AG04450 (cell line): ENCODE measurements at regions of chr6 and their contacts with region 1.

Region 1: GRCh38 chr6:42661540-42662153 is 60.8 kb downstream of the PRPH2 start:
- DNase-seq: peak; percentile 23
- H3K4me3 ChIP-seq: no peak overlapping the region
- H3K27ac ChIP-seq: no peak overlapping the region
- H3K27me3 ChIP-seq: no peaks in the 10 kb centered on the region
- CTCF ChIP-seq: peak; percentile 90

Region 2: GRCh38 chr6:42692137-42692911 is 30.7 kb after region 1 on chr6:
- CTCF ChIA-PET with region 1: interaction called, 10 read pairs
- POLR2A ChIA-PET with region 1: no interaction called
- DNase-seq: no peak
- H3K4me3 ChIP-seq: no peak overlapping the region
- H3K27ac ChIP-seq: peak overlapping the region; percentile 47
- H3K27me3 ChIP-seq: no peaks in the 10 kb centered on the region
- CTCF ChIP-seq: no peak

Region 3: DNA sequence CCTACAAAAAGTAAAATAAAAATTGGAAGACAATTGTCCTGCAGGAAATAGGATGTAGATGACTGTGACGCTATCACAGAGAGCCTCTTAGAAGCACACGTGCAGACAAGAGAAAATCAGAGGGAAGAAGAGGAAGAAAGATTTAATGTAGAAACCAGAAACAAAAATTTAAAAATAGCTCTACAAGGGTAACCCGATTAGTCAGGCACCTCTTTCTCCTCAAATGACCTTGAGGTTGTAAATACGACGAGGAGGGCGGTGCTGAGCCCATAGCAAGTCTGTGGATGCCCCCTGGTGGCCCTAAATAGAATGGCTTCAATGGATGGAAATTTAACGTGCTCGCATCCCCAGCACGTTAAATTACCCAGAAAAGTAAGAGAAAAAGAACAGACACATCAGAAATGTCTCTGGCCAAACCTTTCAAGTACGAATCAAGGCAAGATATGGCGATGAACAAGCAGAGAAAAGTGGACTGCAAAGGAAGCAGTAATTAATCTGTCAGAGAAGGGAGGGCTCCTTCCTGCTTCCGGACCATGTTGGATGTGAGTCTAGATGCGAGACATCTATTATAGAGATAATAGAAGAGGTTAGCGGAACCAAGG is 64.9 kb after region 1 on chr6:
- CTCF ChIA-PET with region 1: interaction called, 51 read pairs
- POLR2A ChIA-PET with region 1: no interaction called
- DNase-seq: peak; percentile 87
- H3K4me3 ChIP-seq: peak overlapping the region; percentile 40
- H3K27ac ChIP-seq: peak overlapping the region; percentile 49
- H3K27me3 ChIP-seq: no peaks in the 10 kb centered on the region
- CTCF ChIP-seq: peak; percentile 93

Region 4: GRCh38 chr6:42879372-42880239 is 218.0 kb after region 1 on chr6 and contains the start of gene RPL7L1:
- CTCF ChIA-PET with region 1: interaction called, 75 read pairs
- POLR2A ChIA-PET with region 1: no interaction called
- DNase-seq: peak; percentile 69
- H3K4me3 ChIP-seq: peak within 1 kb of the TSS; percentile 91
- H3K27ac ChIP-seq: peak within 1 kb of the TSS; percentile 95
- H3K27me3 ChIP-seq: no peaks in the 10 kb centered on the region
- CTCF ChIP-seq: no peak; the same call in 1 of the 2 replicates
- polyA plus RNA-seq, gene RPL7L1: 45.0 and 48.5 TPM in 2 replicates

Region 5: GRCh38 chr6:42901536-42901957 is 239.9 kb after region 1 on chr6:
- CTCF ChIA-PET with region 1: interaction called, 29 read pairs
- POLR2A ChIA-PET with region 1: no interaction called
- DNase-seq: peak; percentile 62
- H3K4me3 ChIP-seq: no peak overlapping the region
- H3K27ac ChIP-seq: no peak overlapping the region
- H3K27me3 ChIP-seq: no peaks in the 10 kb centered on the region
- CTCF ChIP-seq: peak; percentile 83